GM10248 (cell line): ENCODE measurements at regions of chr9 and their contacts with region 1.

Region 1: DNA sequence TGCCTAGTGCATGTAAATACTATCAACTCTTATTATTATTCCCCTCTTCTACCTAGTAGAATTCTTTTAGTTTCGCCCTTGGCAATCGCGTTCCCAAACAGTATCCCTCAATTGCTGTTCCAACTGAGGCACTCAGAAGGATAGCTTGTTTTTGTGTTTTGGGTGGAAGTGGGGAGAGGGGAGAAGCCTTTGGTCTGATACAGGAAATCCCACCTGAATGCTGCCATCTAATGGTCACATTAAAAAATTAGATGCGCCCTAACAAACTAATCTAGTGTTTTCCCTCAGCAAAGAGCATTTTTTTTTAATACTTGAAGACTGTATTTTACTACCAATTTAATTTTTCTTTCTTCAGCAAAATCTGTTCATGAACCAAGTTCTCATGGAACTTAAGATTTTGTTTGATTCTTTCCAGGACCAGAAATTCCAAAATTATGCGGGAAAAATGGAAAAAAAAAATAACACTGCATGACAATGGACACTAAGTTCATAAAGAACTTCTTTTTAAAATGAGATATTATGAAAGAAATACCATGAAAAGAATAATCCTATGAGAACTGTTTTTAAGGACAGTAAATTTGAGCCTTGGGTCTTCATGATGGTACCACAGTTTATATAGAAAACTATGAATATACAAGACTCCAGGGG is 22.2 kb upstream of the GLDC start:
- DNase-seq: peak; percentile 52
- CTCF ChIP-seq: peak; percentile 49

Region 2: GRCh38 chr9:6590334-6590733 is 77.4 kb before region 1 on chr9:
- CTCF ChIA-PET with region 1: interaction called, 25 read pairs
- POLR2A ChIA-PET with region 1: no interaction called
- DNase-seq: no peak
- CTCF ChIP-seq: no peak

Region 3: DNA sequence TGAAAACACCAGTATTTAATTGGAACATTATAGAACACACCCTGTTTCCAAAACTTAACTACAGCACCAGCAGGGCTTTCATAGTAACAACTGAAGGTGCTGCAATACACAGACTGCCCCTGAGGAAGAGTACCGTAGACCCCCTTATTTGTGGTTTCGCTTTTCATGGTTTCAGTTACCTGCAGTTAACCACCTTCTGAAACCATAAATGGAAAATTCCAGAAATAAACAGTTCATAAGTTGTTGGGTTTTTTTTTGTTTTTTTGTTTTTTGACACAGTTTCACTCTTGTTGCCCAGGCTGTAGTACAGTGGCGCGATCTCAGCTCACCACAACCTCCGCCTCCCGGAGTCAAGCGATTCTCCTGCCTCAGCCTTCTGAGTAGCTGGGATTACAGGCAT is 12.7 kb before region 1 on chr9:
- CTCF ChIA-PET with region 1: interaction called, 39 read pairs
- POLR2A ChIA-PET with region 1: no interaction called
- DNase-seq: peak; percentile 37
- CTCF ChIP-seq: no peak

Region 4: GRCh38 chr9:6708732-6709131 is 41.0 kb after region 1 on chr9:
- CTCF ChIA-PET with region 1: no interaction called
- POLR2A ChIA-PET with region 1: no interaction called
- DNase-seq: no peak
- CTCF ChIP-seq: no peak

Region 5: GRCh38 chr9:6723881-6724420 is 56.2 kb after region 1 on chr9:
- CTCF ChIA-PET with region 1: no interaction called
- POLR2A ChIA-PET with region 1: no interaction called
- DNase-seq: no peak
- CTCF ChIP-seq: no peak

Region 6: GRCh38 chr9:6869081-6869948 is 201.6 kb after region 1 on chr9:
- CTCF ChIA-PET with region 1: no interaction called
- POLR2A ChIA-PET with region 1: no interaction called
- DNase-seq: no peak
- CTCF ChIP-seq: no peak